Activated T-helper 1 cell treated with anti-CD3 and anti-CD28 coated beads, Interleukin-12 subunit alpha, Interleukin-12 subunit beta, Interleukin-2, Interleukin-4 antibody, amounts not matched to agents 30 ng/mL and 10 ng/mL and 1 ng/mL, durations not matched to agents 14 hours and 24 hours and 36 hours (primary cell): ENCODE measurements at regions of chr4 and their contacts with region 1.

Region 1: DNA sequence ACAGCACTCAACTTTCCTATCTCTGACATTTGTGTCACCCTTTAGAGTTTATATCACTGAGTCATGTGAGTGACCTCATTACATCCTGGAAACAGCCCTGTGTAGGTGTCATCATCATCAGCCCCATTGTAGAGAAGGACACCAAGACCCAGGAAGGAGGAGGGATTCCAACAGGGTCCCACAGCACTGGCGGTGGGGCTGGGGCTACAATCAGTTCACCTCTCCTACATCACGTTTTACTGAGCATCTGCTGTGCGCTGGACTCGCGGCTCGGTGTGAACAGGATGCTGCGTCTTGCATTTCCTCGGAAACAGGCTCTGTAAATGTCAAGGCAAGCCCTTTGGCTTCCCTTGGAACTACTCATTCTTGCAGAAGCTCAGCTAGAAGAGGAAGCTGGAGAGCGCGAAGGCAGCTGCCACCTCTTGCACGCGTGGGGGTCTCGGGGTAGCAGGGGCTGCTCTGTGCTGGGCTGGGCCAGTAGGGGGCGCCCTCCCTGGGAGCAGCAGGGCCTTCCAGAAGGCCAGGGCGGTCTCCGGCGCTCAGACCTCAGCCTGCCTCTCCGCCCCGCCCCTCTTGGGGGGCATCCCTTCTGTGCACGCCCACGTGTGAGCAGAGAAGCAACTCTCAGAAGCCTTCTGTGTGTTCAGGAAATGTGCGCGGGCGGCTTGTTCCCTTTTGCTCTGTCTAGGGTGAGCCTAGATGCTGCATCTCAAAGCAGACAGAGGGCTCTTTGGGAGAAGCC is 29.0 kb downstream of the REELD1 start:
- DNase-seq: peak; percentile 16
- H3K4me3 Mint-ChIP-seq: peak overlapping the region; percentile 16
- H3K27ac Mint-ChIP-seq: peak overlapping the region; percentile 84
- H3K4me1 Mint-ChIP-seq: peaks cover 35% of the 10 kb centered on the region
- H3K27me3 Mint-ChIP-seq: peaks cover 5% of the 10 kb centered on the region

Region 2: GRCh38 chr4:146095091-146095690 is 148.1 kb before region 1 on chr4:
- intact Hi-C with region 1: loop called (anchors 2 kb)
- DNase-seq: no peak
- H3K4me3 Mint-ChIP-seq: no peak overlapping the region
- H3K27ac Mint-ChIP-seq: no peak overlapping the region
- H3K4me1 Mint-ChIP-seq: peaks cover 4% of the 10 kb centered on the region
- H3K27me3 Mint-ChIP-seq: peaks cover 15% of the 10 kb centered on the region

Region 3: DNA sequence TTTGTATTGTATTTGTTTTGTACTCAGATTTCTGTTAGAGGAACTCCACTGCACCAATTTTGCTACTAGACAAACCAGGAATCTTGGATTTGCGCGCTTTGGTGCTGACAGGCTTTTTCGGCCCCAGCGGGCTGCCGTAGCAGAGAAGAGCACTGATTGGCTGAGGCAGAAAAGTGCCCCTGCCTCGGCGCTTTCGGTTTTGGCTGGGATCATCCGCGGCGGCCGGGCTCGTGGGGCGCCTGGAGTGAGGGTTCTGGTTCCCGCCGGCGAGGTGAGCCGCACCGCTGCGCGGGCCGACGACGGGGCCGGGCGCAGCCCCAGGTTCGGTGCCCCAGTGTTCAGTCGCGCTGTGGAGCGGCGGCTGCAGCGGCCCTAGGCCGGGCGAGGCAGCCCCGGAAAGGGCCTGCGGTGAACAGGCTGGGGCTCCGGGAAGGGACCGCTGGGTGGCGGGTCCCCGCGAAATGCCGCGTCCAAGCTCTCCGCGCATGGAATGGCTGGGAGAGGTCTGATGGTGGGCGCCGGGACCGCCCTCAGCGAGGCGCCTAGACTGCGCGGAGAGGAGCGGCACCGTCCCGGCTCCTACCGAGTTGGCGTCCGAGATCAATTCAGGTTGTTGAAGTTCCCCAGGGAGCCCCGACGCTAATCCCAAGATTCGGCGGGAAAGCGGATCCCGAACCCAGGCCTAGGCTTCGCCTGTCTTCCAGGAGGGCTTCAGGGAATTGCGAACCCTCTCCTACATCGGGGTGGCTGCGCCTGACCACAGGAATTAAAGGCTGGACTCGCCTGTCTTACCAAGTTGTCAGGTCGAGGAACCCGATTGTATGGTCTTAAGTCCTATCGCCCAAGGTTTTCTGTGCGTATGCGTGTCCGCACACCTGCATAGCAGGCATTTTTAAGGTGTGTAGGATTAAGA is 67.5 kb before region 1 on chr4 and contains the start of gene LSM6:
- intact Hi-C with region 1: loop called (anchors 2 kb)
- DNase-seq: peak; percentile 77
- H3K4me3 Mint-ChIP-seq: peak within 1 kb of the TSS; percentile 88
- H3K27ac Mint-ChIP-seq: peak within 1 kb of the TSS; percentile 81
- H3K4me1 Mint-ChIP-seq: peaks cover 40% of the 10 kb centered on the region
- H3K27me3 Mint-ChIP-seq: no peaks in the 10 kb centered on the region
- total RNA-seq, gene LSM6: 62.9 and 65.0 TPM in 2 replicates

Region 4: GRCh38 chr4:146342600-146343192 is 99.4 kb after region 1 on chr4:
- intact Hi-C with region 1: loop called (anchors 1 kb)
- DNase-seq: no peak
- H3K4me3 Mint-ChIP-seq: no peak overlapping the region
- H3K27ac Mint-ChIP-seq: no peak overlapping the region
- H3K4me1 Mint-ChIP-seq: peaks cover 7% of the 10 kb centered on the region
- H3K27me3 Mint-ChIP-seq: peaks cover 2% of the 10 kb centered on the region

Region 5: DNA sequence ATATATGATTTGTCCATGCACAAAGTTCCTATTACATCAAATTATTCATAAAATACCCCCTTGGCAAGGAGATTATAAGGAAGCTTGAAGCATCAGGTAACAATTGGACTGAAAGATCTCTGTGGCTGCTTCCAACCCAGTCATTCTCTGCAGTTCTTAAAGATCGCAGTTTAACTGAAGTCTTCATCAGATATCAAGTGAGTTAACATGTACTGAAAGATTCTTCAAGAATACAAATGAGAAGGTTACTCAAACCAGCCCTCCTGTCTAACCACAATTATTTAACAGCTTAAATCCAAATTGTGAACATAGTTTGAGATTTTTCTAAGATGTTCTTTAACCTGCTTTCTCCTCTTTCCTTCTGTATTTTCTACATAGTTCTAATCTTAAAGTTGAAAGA is 222.3 kb after region 1 on chr4:
- intact Hi-C with region 1: no loop called
- DNase-seq: no peak
- H3K4me3 Mint-ChIP-seq: no peak overlapping the region
- H3K27ac Mint-ChIP-seq: no peak overlapping the region
- H3K4me1 Mint-ChIP-seq: peaks cover 11% of the 10 kb centered on the region
- H3K27me3 Mint-ChIP-seq: no peaks in the 10 kb centered on the region

Region 6: DNA sequence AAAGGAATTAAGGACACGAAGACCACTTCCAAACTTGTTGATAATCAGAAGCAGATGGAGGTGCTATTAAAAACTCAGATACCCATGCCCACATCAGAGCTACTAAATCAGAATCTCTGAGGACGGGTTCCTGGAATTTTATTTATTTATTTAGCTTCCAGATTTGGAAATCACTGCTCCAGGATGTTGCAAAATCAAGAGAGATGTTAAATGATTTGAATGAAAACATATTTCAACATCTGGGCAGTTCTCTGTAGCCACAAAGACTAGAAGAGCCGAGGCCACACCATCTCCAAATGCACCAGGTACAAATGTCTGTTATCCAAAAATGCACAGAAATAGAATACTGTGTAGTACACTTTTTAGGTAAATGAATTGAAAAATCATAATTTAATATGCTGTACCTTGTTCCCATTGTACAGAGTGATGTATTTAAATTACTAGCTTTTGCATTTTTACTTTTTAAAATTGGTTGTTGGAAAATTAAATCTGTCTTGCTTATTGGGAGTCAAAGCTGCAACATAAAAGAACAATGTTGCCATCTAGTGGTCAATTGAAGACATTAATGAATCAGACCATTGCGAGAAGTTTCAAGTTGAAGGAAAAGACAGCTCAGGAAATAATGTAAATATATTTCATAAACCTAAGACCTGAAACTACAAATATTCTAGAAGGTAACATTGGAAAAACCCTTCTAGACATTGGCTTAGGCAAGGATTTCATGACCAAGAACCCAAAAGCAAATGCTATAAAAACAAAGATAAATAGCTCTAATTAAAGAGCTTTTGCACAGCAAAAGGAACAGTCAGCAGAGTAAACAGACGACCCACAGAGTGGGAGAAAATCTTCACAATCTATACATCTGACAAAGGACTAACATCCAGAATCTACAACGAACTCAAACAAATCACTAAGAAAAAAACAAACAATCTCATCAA is 853.6 kb after region 1 on chr4:
- intact Hi-C with region 1: loop called (anchors 1 kb)
- DNase-seq: no peak
- H3K4me3 Mint-ChIP-seq: no peak overlapping the region
- H3K27ac Mint-ChIP-seq: no peak overlapping the region
- H3K4me1 Mint-ChIP-seq: no peaks in the 10 kb centered on the region
- H3K27me3 Mint-ChIP-seq: peaks cover 12% of the 10 kb centered on the region